CD8-positive, alpha-beta memory T cell (primary cell): ENCODE measurements at regions of chr1 and their contacts with region 1.

Region 1: GRCh38 chr1:226662642-226663326 is 76.3 kb downstream of the ITPKB start:
- DNase-seq: peak; percentile 80 to 96 (median 87)
- H3K4me3 ChIP-seq: peak overlapping the region; percentile 20
- H3K4me3 Mint-ChIP-seq: peak overlapping the region; percentile 60 to 79 (median 70)
- H3K27ac ChIP-seq: peak overlapping the region; percentile 66
- H3K27ac Mint-ChIP-seq: peak overlapping the region in 7 of 8 donors; percentile 89 to 99 (median 98)
- H3K4me1 ChIP-seq: peaks cover 48% of the 10 kb centered on the region
- H3K4me1 Mint-ChIP-seq: peaks cover 0 to 93% (median 90%) of the 10 kb centered on the region in 3 donors
- H3K27me3 ChIP-seq: no peaks in the 10 kb centered on the region
- H3K27me3 Mint-ChIP-seq: no peaks in the 10 kb centered on the region

Region 2: GRCh38 chr1:226679853-226680516 is 17.2 kb after region 1 on chr1:
- CTCF ChIA-PET with region 1: interaction called, 12 read pairs
- POLR2A ChIA-PET with region 1: interaction called, 13 read pairs
- DNase-seq: peak; percentile 69 to 89 (median 78)
- H3K4me3 ChIP-seq: peak overlapping the region; percentile 38
- H3K4me3 Mint-ChIP-seq: peak overlapping the region; percentile 52 to 91 (median 84)
- H3K27ac ChIP-seq: peak overlapping the region; percentile 72
- H3K27ac Mint-ChIP-seq: peak overlapping the region; percentile 94 to 99 (median 98)
- H3K4me1 ChIP-seq: peaks cover 99% of the 10 kb centered on the region
- H3K4me1 Mint-ChIP-seq: peaks cover 97 to 100% (median 99%) of the 10 kb centered on the region in 3 donors
- H3K27me3 ChIP-seq: no peaks in the 10 kb centered on the region
- H3K27me3 Mint-ChIP-seq: peaks cover 0 to under 1% of the 10 kb centered on the region in 2 donors

Region 3: DNA sequence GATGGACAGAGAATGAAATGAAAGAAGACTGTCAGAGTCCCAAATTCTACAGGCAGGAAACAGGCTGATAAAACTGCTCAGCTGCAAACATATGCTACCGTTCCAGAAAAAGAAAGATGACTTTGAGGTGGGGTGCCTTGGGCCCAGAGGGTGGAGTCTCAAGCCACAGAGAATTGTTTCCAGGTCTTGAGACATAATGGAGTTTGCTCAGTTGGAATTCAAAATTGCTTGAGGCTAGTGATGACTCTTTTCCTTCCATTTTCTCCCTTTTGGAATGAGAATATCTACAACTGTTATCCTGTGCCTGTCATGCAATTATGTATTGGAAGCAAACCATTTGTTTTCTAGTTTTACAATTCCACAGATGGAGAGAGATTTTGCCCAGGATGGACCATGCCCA is 184.0 kb after region 1 on chr1:
- CTCF ChIA-PET with region 1: no interaction called
- POLR2A ChIA-PET with region 1: no interaction called
- DNase-seq: no peak
- H3K4me3 ChIP-seq: no peak overlapping the region
- H3K4me3 Mint-ChIP-seq: no peak overlapping the region
- H3K27ac ChIP-seq: no peak overlapping the region
- H3K27ac Mint-ChIP-seq: no peak overlapping the region
- H3K4me1 ChIP-seq: no peaks in the 10 kb centered on the region
- H3K4me1 Mint-ChIP-seq: no peaks in the 10 kb centered on the region
- H3K27me3 ChIP-seq: no peaks in the 10 kb centered on the region
- H3K27me3 Mint-ChIP-seq: peaks cover 3 to 6% of the 10 kb centered on the region in 2 donors